Naive thymus-derived CD4-positive, alpha-beta T cell (primary cell): ENCODE measurements at regions of chr12 and their contacts with region 1.

Region 1: DNA sequence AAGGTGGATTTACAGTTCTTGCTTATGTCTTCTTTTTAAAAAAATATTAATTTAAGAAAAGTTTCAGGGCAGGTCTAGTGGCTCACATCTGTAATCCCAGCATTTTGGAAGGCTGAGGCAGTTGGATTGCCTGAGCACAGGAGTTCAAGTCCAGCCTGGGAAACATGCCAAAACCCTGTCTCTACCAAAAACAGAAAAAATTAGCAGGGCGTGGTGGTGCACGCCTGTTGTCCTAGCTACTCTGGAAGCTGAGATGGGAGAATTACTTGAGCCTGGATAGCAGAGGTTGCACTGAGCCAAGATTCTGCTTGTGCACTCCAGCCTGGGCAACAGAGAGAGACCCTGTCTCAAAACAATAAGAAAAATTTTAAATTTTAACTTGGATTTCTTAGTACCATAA is 5.4 kb upstream of the TAS2R46 start:
- DNase-seq: no peak
- ATAC-seq: no peak
- H3K4me3 ChIP-seq: no peak overlapping the region
- H3K4me3 Mint-ChIP-seq: no peak overlapping the region
- H3K27ac ChIP-seq: no peak overlapping the region
- H3K27ac Mint-ChIP-seq: no peak overlapping the region
- H3K4me1 ChIP-seq: no peaks in the 10 kb centered on the region
- H3K4me1 Mint-ChIP-seq: peaks cover 0 to 23% (median 14%) of the 10 kb centered on the region in 7 donors
- H3K27me3 ChIP-seq: no peaks in the 10 kb centered on the region
- H3K27me3 Mint-ChIP-seq: no peaks in the 10 kb centered on the region

Region 2: DNA sequence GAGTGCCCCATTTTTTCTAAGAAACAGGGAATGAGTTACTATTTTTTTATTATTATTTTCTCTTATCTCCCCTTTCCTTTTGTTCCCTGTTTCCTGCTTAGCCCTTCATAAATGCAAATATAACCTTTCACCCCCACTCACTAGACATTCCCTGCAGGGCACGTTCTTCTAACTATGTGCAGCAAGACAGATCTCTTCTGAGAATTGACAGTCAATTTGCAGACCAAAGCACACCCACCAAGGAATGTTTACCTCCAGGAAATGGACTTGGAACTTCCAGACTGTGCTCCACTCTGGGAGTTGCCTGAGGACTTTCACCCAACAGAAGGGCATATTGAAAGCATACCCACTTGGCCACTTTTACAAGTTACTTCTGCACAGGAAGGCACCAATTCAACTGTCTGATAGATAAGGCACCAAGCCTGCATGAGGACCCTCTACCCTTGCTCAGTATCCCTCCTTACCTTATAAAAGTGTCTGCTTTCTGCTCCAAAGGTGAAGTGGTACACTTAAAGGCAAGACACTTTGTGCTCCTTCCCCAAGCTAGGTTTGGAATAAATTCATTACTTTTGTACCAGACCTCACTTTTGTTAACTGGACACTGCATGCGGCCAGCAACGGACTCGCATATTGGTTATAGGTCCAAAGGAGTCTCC is 51.6 kb before region 1 on chr12:
- CTCF ChIA-PET with region 1: no interaction called
- POLR2A ChIA-PET with region 1: no interaction called
- intact Hi-C with region 1: loop called (anchors 1 to 2 kb)
- DNase-seq: no peak
- ATAC-seq: no peak
- H3K4me3 ChIP-seq: no peak overlapping the region
- H3K4me3 Mint-ChIP-seq: no peak overlapping the region
- H3K27ac ChIP-seq: no peak overlapping the region
- H3K27ac Mint-ChIP-seq: no peak overlapping the region
- H3K4me1 ChIP-seq: no peaks in the 10 kb centered on the region
- H3K4me1 Mint-ChIP-seq: peaks cover 0 to 13% (median 6%) of the 10 kb centered on the region in 7 donors
- H3K27me3 ChIP-seq: no peaks in the 10 kb centered on the region
- H3K27me3 Mint-ChIP-seq: no peaks in the 10 kb centered on the region

Region 3: GRCh38 chr12:11039171-11039570 is 28.3 kb before region 1 on chr12:
- CTCF ChIA-PET with region 1: no interaction called
- POLR2A ChIA-PET with region 1: no interaction called
- intact Hi-C with region 1: loop called in 1 of 2 experiments (anchors 1 kb)
- DNase-seq: no peak
- ATAC-seq: no peak
- H3K4me3 ChIP-seq: no peak overlapping the region
- H3K4me3 Mint-ChIP-seq: no peak overlapping the region
- H3K27ac ChIP-seq: no peak overlapping the region
- H3K27ac Mint-ChIP-seq: no peak overlapping the region
- H3K4me1 ChIP-seq: no peaks in the 10 kb centered on the region
- H3K4me1 Mint-ChIP-seq: peaks cover 0 to 25% (median 16%) of the 10 kb centered on the region in 7 donors
- H3K27me3 ChIP-seq: no peaks in the 10 kb centered on the region
- H3K27me3 Mint-ChIP-seq: no peaks in the 10 kb centered on the region